ENCODE measurements at regions of chr4 and their contacts with region 1.

Region 1: DNA sequence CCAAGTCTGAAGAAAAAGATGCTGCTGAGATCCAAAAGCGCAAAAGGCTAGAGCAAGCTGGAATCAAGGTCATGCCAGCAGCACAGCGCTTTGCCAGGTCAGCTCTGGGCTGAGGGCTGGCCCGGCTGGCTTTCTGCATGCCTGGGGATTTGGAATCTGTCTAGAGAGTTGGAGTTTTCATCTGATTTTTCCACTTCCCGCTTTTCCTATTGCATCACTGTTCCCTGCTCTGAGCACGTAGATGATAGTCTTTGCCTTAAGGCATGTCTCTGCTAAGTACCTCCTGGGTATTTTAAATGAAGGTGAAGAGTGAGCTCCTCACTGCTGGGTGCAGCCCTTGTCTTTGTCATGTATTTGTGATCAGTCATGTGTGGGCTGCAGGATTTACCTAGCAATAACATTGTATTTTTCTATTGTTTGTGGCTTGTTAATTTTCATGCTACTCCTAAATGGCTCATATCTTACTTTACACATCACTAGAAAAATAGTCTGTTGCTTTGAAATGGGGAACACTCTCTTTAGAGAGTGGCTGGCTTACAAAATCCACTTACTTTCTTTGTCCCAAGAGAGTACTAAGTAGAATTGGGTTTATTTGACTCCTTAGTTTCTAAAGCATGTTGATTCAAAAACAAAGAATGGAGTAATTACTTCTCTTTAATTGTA is 82.8 kb downstream of the LIMCH1 start:
- DNase-seq: peak in 1 of 5 donors; percentile 27
- ATAC-seq: peak in 2 of 4 donors; percentile 6 to 62
- H3K4me3 ChIP-seq: no peak overlapping the region
- H3K27ac ChIP-seq: peak overlapping the region in 1 of 12 donors; percentile 26
- H3K4me1 ChIP-seq: peaks cover 0 to 26% (median 5%) of the 10 kb centered on the region in 12 donors
- H3K27me3 ChIP-seq: no peaks in the 10 kb centered on the region
- CTCF ChIP-seq: no peak
- POLR2A ChIP-seq: no peak

Region 2: GRCh38 chr4:41448934-41449333 is 171.8 kb before region 1 on chr4:
- intact Hi-C with region 1: loop called in 1 of 10 experiments (anchors 10 kb)
- DNase-seq: peak in 4 of 5 donors; percentile 62 to 72 (median 67)
- ATAC-seq: peak; percentile 52 to 84 (median 76)
- H3K4me3 ChIP-seq: no peak overlapping the region
- H3K27ac ChIP-seq: peak overlapping the region in 3 of 12 donors; percentile 25 to 33 (median 27)
- H3K4me1 ChIP-seq: peaks cover 0 to 60% (median 25%) of the 10 kb centered on the region in 12 donors
- H3K27me3 ChIP-seq: no peaks in the 10 kb centered on the region
- CTCF ChIP-seq: no peak
- POLR2A ChIP-seq: no peak

Region 3: GRCh38 chr4:41799126-41799525 is 178.4 kb after region 1 on chr4:
- intact Hi-C with region 1: no loop called
- DNase-seq: no peak
- ATAC-seq: no peak
- H3K4me3 ChIP-seq: no peak overlapping the region
- H3K27ac ChIP-seq: no peak overlapping the region
- H3K4me1 ChIP-seq: peaks cover 0 to 14% (median 10%) of the 10 kb centered on the region in 12 donors
- H3K27me3 ChIP-seq: peaks cover 0 to 17% (median 0%) of the 10 kb centered on the region in 9 donors
- CTCF ChIP-seq: no peak
- POLR2A ChIP-seq: no peak

Region 4: DNA sequence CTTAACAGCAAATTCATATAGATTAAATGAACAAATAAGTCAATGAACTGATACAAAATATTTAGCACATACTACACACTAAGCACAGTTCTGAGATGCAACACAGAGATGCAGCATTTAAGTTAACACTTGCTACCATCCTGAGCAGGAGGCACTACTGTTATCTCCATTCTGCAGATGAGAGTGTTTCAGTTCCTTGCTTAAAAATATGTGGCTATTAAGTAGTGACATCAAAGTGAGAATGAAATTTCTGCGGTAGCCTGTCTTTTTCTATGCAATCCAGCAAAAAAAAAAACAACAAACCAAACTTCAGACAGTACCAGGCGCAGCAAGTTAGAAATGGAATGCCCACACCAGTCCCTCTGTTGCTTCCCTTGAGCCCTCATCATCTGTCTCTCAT is 867.4 kb after region 1 on chr4:
- intact Hi-C with region 1: no loop called
- DNase-seq: no peak
- ATAC-seq: no peak
- H3K4me3 ChIP-seq: no peak overlapping the region
- H3K27ac ChIP-seq: no peak overlapping the region
- H3K4me1 ChIP-seq: peaks cover 0 to under 1% (median 0%) of the 10 kb centered on the region in 12 donors
- H3K27me3 ChIP-seq: no peaks in the 10 kb centered on the region
- CTCF ChIP-seq: no peak
- POLR2A ChIP-seq: no peak